Calu3 (cell line): ENCODE measurements at regions of chr17 and their contacts with region 1.

Region 1: GRCh38 chr17:39754161-39754951 is 16.6 kb downstream of the GRB7 start:
- DNase-seq: peak; percentile 100
- H3K4me3 Mint-ChIP-seq: peak overlapping the region; percentile 63
- H3K27ac Mint-ChIP-seq: peak overlapping the region; percentile 12
- H3K4me1 Mint-ChIP-seq: peaks cover 58% of the 10 kb centered on the region
- H3K27me3 Mint-ChIP-seq: peaks cover 35% of the 10 kb centered on the region
- CTCF ChIP-seq: no peak

Region 2: GRCh38 chr17:39318636-39319035 is 435.7 kb before region 1 on chr17:
- CTCF ChIA-PET with region 1: no interaction called
- intact Hi-C with region 1: no loop called
- DNase-seq: no peak
- H3K4me3 Mint-ChIP-seq: no peak overlapping the region
- H3K27ac Mint-ChIP-seq: no peak overlapping the region
- H3K4me1 Mint-ChIP-seq: no peaks in the 10 kb centered on the region
- H3K27me3 Mint-ChIP-seq: no peaks in the 10 kb centered on the region
- CTCF ChIP-seq: no peak

Region 3: GRCh38 chr17:39541652-39542051 is 212.7 kb before region 1 on chr17:
- CTCF ChIA-PET with region 1: no interaction called
- intact Hi-C with region 1: no loop called
- DNase-seq: no peak
- H3K4me3 Mint-ChIP-seq: no peak overlapping the region
- H3K27ac Mint-ChIP-seq: no peak overlapping the region
- H3K4me1 Mint-ChIP-seq: peaks cover 24% of the 10 kb centered on the region
- H3K27me3 Mint-ChIP-seq: no peaks in the 10 kb centered on the region
- CTCF ChIP-seq: no peak

Region 4: DNA sequence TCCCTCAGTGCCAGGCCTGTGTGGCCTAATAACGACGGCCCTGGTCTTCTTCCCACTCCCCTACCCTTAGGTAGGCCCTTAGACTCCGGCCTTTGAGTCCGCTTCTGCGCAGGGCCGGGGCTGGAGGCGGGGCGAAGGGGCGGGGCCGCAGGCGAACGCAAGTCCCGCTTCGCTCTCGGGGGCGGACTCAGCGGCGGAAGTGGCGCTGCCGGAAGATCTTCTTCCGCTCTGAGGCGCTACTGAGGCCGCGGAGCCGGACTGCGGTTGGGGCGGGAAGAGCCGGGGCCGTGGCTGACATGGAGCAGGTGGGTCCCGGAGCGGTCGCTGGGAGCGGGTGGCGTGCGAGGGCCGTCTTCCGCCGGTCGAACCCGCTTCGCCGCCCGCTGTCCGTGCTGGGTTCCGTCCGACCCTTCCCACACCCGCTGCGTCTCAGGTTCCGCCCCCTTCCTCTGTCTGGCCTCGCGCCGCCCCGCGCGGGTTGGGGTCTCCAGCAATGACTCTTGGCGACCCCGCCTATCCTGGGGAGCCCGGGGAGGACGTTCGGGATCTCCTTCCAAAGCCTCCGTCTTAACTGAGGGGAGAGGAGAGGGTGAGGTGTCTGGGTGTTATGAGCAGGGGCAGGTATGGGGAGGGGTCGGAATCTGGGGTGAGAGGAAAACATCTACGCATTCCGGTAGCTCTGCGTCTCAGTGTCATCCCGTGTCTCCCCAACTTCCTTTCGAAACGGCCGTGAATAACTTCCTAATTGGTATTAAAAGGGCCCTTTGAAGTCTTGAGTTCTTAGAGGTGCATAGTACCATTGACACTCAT is 117.2 kb before region 1 on chr17 and contains the start of gene STARD3:
- CTCF ChIA-PET with region 1: interaction called, 42,089 read pairs
- intact Hi-C with region 1: loop called (anchors 1 kb)
- DNase-seq: no peak
- H3K4me3 Mint-ChIP-seq: peak within 1 kb of the TSS; percentile 71
- H3K27ac Mint-ChIP-seq: peak within 1 kb of the TSS; percentile 28
- H3K4me1 Mint-ChIP-seq: peaks cover 61% of the 10 kb centered on the region
- H3K27me3 Mint-ChIP-seq: peaks cover 5% of the 10 kb centered on the region
- CTCF ChIP-seq: no peak
- total RNA-seq, gene STARD3: 2,579 and 2,697 TPM in 2 replicates

Region 5: GRCh38 chr17:39717660-39718059 is 36.7 kb before region 1 on chr17:
- CTCF ChIA-PET with region 1: interaction called, 34,714 read pairs
- intact Hi-C with region 1: loop called (anchors 1 kb)
- DNase-seq: no peak
- H3K4me3 Mint-ChIP-seq: no peak overlapping the region
- H3K27ac Mint-ChIP-seq: peak overlapping the region; percentile 2
- H3K4me1 Mint-ChIP-seq: peaks cover 21% of the 10 kb centered on the region
- H3K27me3 Mint-ChIP-seq: no peaks in the 10 kb centered on the region
- CTCF ChIP-seq: no peak

Region 6: GRCh38 chr17:39800540-39800939 is 46.2 kb after region 1 on chr17:
- CTCF ChIA-PET with region 1: interaction called, 127 read pairs
- intact Hi-C with region 1: no loop called
- DNase-seq: peak; percentile 85
- H3K4me3 Mint-ChIP-seq: no peak overlapping the region
- H3K27ac Mint-ChIP-seq: no peak overlapping the region
- H3K4me1 Mint-ChIP-seq: peaks cover 17% of the 10 kb centered on the region
- H3K27me3 Mint-ChIP-seq: no peaks in the 10 kb centered on the region
- CTCF ChIP-seq: no peak

Region 7: DNA sequence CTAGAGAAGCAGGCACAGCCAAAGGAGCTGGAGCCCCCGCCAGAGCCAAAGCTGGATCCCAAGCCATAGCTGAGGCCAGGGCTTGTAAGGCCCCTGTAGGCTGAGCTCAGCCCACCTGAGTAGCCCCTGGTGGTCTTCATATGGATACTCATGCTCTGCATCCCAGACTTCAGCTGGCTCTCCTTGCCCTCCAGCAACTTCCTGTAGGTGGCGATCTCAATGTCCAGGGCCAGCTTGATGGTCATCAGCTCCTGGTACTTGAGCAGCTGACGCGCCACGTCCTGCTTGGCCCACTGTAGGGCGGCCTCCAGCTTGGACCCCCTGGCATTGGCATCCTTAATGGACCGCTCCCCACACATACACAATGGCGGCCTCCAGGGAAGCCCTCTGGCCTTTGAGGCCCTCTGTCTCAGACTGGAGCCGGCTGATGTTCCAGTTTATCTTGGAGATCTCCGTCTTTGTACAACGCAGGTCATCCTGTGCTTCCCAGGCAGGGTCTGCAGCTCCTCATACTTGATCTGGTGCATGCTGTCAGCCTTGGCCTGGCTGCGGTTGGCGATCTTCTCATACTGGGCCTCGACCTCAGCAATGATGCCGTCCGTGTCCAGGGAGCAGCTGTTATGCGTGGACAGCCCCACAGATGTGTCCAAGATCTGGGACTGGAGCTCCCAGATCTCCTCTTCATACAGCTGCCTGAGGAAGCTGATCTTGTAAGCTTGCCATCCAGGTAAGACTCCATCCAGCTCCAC is 80.9 kb after region 1 on chr17:
- CTCF ChIA-PET with region 1: interaction called, 1,211 read pairs
- intact Hi-C with region 1: no loop called
- DNase-seq: peak; percentile 79
- H3K4me3 Mint-ChIP-seq: no peak overlapping the region
- H3K27ac Mint-ChIP-seq: no peak overlapping the region
- H3K4me1 Mint-ChIP-seq: no peaks in the 10 kb centered on the region
- H3K27me3 Mint-ChIP-seq: no peaks in the 10 kb centered on the region
- CTCF ChIP-seq: no peak

Region 8: DNA sequence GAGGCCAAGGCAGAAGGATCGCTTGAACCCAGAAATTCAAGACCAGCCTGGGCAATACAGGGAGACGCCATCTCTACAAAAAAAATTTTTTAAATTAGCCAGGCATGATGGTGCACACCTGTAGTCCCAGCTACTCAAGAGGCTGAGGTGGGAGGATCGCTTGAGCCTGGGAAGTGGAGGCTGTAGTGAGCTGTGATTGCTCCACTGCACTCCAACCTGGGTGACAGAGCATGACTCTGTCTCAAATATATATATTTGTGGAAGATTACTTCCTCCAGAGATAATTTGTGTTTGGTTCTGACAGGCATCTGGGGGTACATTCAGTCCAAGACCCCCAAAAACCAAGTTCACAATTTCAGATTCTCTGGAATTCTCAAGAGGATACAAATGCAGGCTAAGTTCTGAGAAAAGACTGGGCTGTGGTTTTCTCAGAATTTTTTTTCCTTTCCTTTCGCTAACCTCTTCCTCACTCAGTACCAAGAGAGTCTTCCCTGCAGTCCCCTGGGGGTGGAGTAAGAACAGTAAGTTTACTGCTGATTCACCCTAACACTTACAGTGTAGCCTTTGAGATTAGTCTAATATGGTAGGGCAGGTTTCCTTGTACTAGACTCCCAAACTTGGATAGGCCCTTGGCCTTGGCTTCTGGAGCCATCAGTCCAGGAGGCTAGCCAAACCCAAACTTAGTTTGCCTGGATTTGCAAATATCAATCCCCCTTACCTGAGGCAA is 149.0 kb after region 1 on chr17:
- CTCF ChIA-PET with region 1: interaction called, 138 read pairs
- intact Hi-C with region 1: no loop called
- DNase-seq: peak; percentile 66
- H3K4me3 Mint-ChIP-seq: no peak overlapping the region
- H3K27ac Mint-ChIP-seq: no peak overlapping the region
- H3K4me1 Mint-ChIP-seq: peaks cover 12% of the 10 kb centered on the region
- H3K27me3 Mint-ChIP-seq: no peaks in the 10 kb centered on the region
- CTCF ChIP-seq: no peak

Region 9: GRCh38 chr17:39952680-39953470 is 198.5 kb after region 1 on chr17:
- CTCF ChIA-PET with region 1: interaction called, 1,070 read pairs
- intact Hi-C with region 1: loop called (anchors 1 kb)
- DNase-seq: peak; percentile 100
- H3K4me3 Mint-ChIP-seq: peak overlapping the region; percentile 58
- H3K27ac Mint-ChIP-seq: peak overlapping the region; percentile 18
- H3K4me1 Mint-ChIP-seq: peaks cover 42% of the 10 kb centered on the region
- H3K27me3 Mint-ChIP-seq: peaks cover 15% of the 10 kb centered on the region
- CTCF ChIP-seq: no peak

Region 10: GRCh38 chr17:40113110-40113906 is 359.0 kb after region 1 on chr17:
- CTCF ChIA-PET with region 1: no interaction called
- intact Hi-C with region 1: no loop called
- DNase-seq: peak; percentile 100
- H3K4me3 Mint-ChIP-seq: peak overlapping the region; percentile 65
- H3K27ac Mint-ChIP-seq: peak overlapping the region; percentile 74
- H3K4me1 Mint-ChIP-seq: peaks cover 58% of the 10 kb centered on the region
- H3K27me3 Mint-ChIP-seq: no peaks in the 10 kb centered on the region
- CTCF ChIP-seq: no peak

Region 11: GRCh38 chr17:40317880-40318829 is 563.8 kb after region 1 on chr17:
- CTCF ChIA-PET with region 1: no interaction called
- intact Hi-C with region 1: no loop called
- DNase-seq: peak; percentile 100
- H3K4me3 Mint-ChIP-seq: peak overlapping the region; percentile 89
- H3K27ac Mint-ChIP-seq: peak overlapping the region; percentile 71
- H3K4me1 Mint-ChIP-seq: peaks cover 45% of the 10 kb centered on the region
- H3K27me3 Mint-ChIP-seq: no peaks in the 10 kb centered on the region
- CTCF ChIP-seq: no peak